Caco-2 (cell line): ENCODE measurements at regions of chr4 and their contacts with region 1.

Region 1: GRCh38 chr4:122577808-122578781 is 42.8 kb downstream of the IL21 start:
- DNase-seq: peak; percentile 57 to 63
- H3K4me3 ChIP-seq: no peak overlapping the region
- H3K4me3 Mint-ChIP-seq: no peak overlapping the region
- H3K27ac Mint-ChIP-seq: no peak overlapping the region
- H3K4me1 ChIP-seq: peaks cover 4% of the 10 kb centered on the region; the same call in 1 of the 2 replicates
- H3K4me1 Mint-ChIP-seq: no peaks in the 10 kb centered on the region
- H3K27me3 ChIP-seq: no peaks in the 10 kb centered on the region
- H3K27me3 Mint-ChIP-seq: peaks cover 2% of the 10 kb centered on the region
- CTCF ChIP-seq: peak; percentile 59 to 84

Region 2: GRCh38 chr4:121900132-121900983 is 677.7 kb before region 1 on chr4:
- CTCF ChIA-PET with region 1: interaction called, 11 read pairs
- POLR2A ChIA-PET with region 1: no interaction called
- intact Hi-C with region 1: loop called (anchors 1 kb)
- DNase-seq: peak; percentile 44 to 62
- H3K4me3 ChIP-seq: no peak overlapping the region
- H3K4me3 Mint-ChIP-seq: no peak overlapping the region
- H3K27ac Mint-ChIP-seq: no peak overlapping the region
- H3K4me1 ChIP-seq: no peaks in the 10 kb centered on the region
- H3K4me1 Mint-ChIP-seq: no peaks in the 10 kb centered on the region
- H3K27me3 ChIP-seq: no peaks in the 10 kb centered on the region
- H3K27me3 Mint-ChIP-seq: peaks cover 5% of the 10 kb centered on the region
- CTCF ChIP-seq: peak; percentile 73 to 74

Region 3: GRCh38 chr4:122003335-122003734 is 574.8 kb before region 1 on chr4:
- CTCF ChIA-PET with region 1: no interaction called
- POLR2A ChIA-PET with region 1: no interaction called
- intact Hi-C with region 1: loop called (anchors 2 kb)
- DNase-seq: peak; percentile 83 to 87
- H3K4me3 ChIP-seq: no peak overlapping the region
- H3K4me3 Mint-ChIP-seq: peak overlapping the region; percentile 64
- H3K27ac Mint-ChIP-seq: peak overlapping the region; percentile 42
- H3K4me1 ChIP-seq: peaks cover 7% of the 10 kb centered on the region
- H3K4me1 Mint-ChIP-seq: peaks cover 7% of the 10 kb centered on the region
- H3K27me3 ChIP-seq: no peaks in the 10 kb centered on the region
- H3K27me3 Mint-ChIP-seq: peaks cover 3% of the 10 kb centered on the region
- CTCF ChIP-seq: peak; percentile 55 to 59

Region 4: DNA sequence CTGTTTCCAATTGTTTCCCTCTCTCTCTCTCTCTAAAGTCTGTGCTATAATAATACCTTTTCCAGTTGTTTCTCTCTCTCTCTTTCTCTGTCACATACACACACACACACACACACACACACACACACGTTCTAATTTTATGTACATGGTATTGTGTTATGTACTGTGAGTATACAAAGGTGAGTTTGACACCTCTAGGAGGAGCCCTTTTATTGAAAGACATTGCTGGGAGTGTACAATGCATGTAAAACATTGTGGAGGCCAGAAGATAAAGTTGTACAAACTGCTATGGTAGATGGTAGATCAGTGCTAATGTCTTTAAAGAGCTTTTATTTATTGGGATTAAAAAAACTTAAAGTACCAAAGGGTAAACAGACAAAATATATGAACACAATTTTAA is 372.4 kb before region 1 on chr4:
- CTCF ChIA-PET with region 1: no interaction called
- POLR2A ChIA-PET with region 1: no interaction called
- intact Hi-C with region 1: loop called (anchors 5 kb)
- DNase-seq: peak in 1 of 2 experiments; percentile 4
- H3K4me3 ChIP-seq: no peak overlapping the region
- H3K4me3 Mint-ChIP-seq: no peak overlapping the region
- H3K27ac Mint-ChIP-seq: no peak overlapping the region
- H3K4me1 ChIP-seq: no peaks in the 10 kb centered on the region
- H3K4me1 Mint-ChIP-seq: no peaks in the 10 kb centered on the region
- H3K27me3 ChIP-seq: no peaks in the 10 kb centered on the region
- H3K27me3 Mint-ChIP-seq: no peaks in the 10 kb centered on the region
- CTCF ChIP-seq: peak in 1 of 2 experiments; percentile 20

Region 5: DNA sequence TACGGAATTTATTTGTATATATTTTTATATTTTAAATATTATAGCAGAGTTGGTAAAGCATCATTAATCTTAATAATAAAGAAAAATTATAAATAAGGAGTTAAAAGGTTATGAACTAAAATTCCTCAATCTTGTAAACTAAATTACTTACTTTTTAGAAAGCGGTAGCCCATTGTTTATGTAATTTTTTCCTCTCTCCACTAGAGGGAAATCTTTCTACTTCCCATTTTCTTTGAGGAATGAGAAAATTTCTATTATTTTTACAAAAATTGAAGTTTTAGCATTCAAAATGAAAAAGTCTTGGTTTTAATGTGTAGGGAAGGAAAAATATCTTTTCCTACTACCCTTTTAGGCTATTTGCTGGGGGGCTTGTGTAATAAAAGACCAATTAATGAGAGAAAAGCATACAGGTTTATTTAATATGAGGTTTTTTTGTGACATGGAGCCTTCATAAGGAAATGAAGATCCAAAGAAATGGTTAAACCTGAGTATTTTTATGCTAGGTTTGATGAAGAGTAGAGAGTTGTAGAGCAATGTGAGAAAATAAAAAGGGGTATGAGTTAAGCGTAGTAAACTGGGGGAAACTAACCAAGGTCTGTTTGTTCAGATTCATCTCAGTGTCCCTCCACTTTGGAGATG is 268.0 kb before region 1 on chr4:
- CTCF ChIA-PET with region 1: interaction called, 3 read pairs
- POLR2A ChIA-PET with region 1: no interaction called
- intact Hi-C with region 1: loop called (anchors 1 kb)
- DNase-seq: no peak
- H3K4me3 ChIP-seq: no peak overlapping the region
- H3K4me3 Mint-ChIP-seq: no peak overlapping the region
- H3K27ac Mint-ChIP-seq: no peak overlapping the region
- H3K4me1 ChIP-seq: no peaks in the 10 kb centered on the region
- H3K4me1 Mint-ChIP-seq: no peaks in the 10 kb centered on the region
- H3K27me3 ChIP-seq: no peaks in the 10 kb centered on the region
- H3K27me3 Mint-ChIP-seq: no peaks in the 10 kb centered on the region
- CTCF ChIP-seq: peak in 1 of 2 experiments; percentile 47

Region 6: GRCh38 chr4:122383341-122383740 is 194.8 kb before region 1 on chr4:
- CTCF ChIA-PET with region 1: no interaction called
- POLR2A ChIA-PET with region 1: no interaction called
- intact Hi-C with region 1: loop called (anchors 10 kb)
- DNase-seq: no peak
- H3K4me3 ChIP-seq: no peak overlapping the region
- H3K4me3 Mint-ChIP-seq: no peak overlapping the region
- H3K27ac Mint-ChIP-seq: no peak overlapping the region
- H3K4me1 ChIP-seq: no peaks in the 10 kb centered on the region
- H3K4me1 Mint-ChIP-seq: no peaks in the 10 kb centered on the region
- H3K27me3 ChIP-seq: no peaks in the 10 kb centered on the region
- H3K27me3 Mint-ChIP-seq: no peaks in the 10 kb centered on the region
- CTCF ChIP-seq: no peak

Region 7: GRCh38 chr4:122450847-122451246 is 127.2 kb before region 1 on chr4:
- CTCF ChIA-PET with region 1: interaction called, 3 read pairs
- POLR2A ChIA-PET with region 1: no interaction called
- intact Hi-C with region 1: loop called (anchors 2 kb)
- DNase-seq: peak; percentile 36 to 42
- H3K4me3 ChIP-seq: no peak overlapping the region
- H3K4me3 Mint-ChIP-seq: no peak overlapping the region
- H3K27ac Mint-ChIP-seq: no peak overlapping the region
- H3K4me1 ChIP-seq: no peaks in the 10 kb centered on the region
- H3K4me1 Mint-ChIP-seq: no peaks in the 10 kb centered on the region
- H3K27me3 ChIP-seq: no peaks in the 10 kb centered on the region
- H3K27me3 Mint-ChIP-seq: no peaks in the 10 kb centered on the region
- CTCF ChIP-seq: peak in 1 of 2 experiments; percentile 36